ENCODE measurements at regions of chr10 and their contacts with region 1.

Region 1: GRCh38 chr10:100508691-100509150 is 10.9 kb downstream of the SEC31B start:
- DNase-seq: peak in 1 of 2 experiments; percentile 68
- H3K4me3 ChIP-seq: no peak overlapping the region
- H3K4me3 Mint-ChIP-seq: no peak overlapping the region
- H3K27ac Mint-ChIP-seq: no peak overlapping the region
- H3K4me1 ChIP-seq: peaks cover 20% of the 10 kb centered on the region
- H3K4me1 Mint-ChIP-seq: peaks cover 12% of the 10 kb centered on the region
- H3K27me3 ChIP-seq: no peaks in the 10 kb centered on the region
- H3K27me3 Mint-ChIP-seq: no peaks in the 10 kb centered on the region
- CTCF ChIP-seq: peak; percentile 55 to 61

Region 2: GRCh38 chr10:100229819-100230422 is 278.8 kb before region 1 on chr10:
- CTCF ChIA-PET with region 1: no interaction called
- POLR2A ChIA-PET with region 1: no interaction called
- intact Hi-C with region 1: loop called (anchors 5 kb)
- DNase-seq: no peak
- H3K4me3 ChIP-seq: peak overlapping the region; percentile 57
- H3K4me3 Mint-ChIP-seq: peak overlapping the region; percentile 93
- H3K27ac Mint-ChIP-seq: peak overlapping the region; percentile 83
- H3K4me1 ChIP-seq: no peaks in the 10 kb centered on the region
- H3K4me1 Mint-ChIP-seq: peaks cover 22% of the 10 kb centered on the region
- H3K27me3 ChIP-seq: no peaks in the 10 kb centered on the region
- H3K27me3 Mint-ChIP-seq: no peaks in the 10 kb centered on the region
- CTCF ChIP-seq: no peak

Region 3: GRCh38 chr10:100338434-100339036 is 170.2 kb before region 1 on chr10:
- CTCF ChIA-PET with region 1: interaction called, 6 read pairs
- POLR2A ChIA-PET with region 1: no interaction called
- intact Hi-C with region 1: loop called (anchors 1 kb)
- DNase-seq: peak; percentile 67 to 83
- H3K4me3 ChIP-seq: no peak overlapping the region
- H3K4me3 Mint-ChIP-seq: no peak overlapping the region
- H3K27ac Mint-ChIP-seq: no peak overlapping the region
- H3K4me1 ChIP-seq: peaks cover 4% of the 10 kb centered on the region
- H3K4me1 Mint-ChIP-seq: peaks cover 22% of the 10 kb centered on the region
- H3K27me3 ChIP-seq: no peaks in the 10 kb centered on the region
- H3K27me3 Mint-ChIP-seq: peaks cover 2% of the 10 kb centered on the region
- CTCF ChIP-seq: peak; percentile 95 to 96

Region 4: DNA sequence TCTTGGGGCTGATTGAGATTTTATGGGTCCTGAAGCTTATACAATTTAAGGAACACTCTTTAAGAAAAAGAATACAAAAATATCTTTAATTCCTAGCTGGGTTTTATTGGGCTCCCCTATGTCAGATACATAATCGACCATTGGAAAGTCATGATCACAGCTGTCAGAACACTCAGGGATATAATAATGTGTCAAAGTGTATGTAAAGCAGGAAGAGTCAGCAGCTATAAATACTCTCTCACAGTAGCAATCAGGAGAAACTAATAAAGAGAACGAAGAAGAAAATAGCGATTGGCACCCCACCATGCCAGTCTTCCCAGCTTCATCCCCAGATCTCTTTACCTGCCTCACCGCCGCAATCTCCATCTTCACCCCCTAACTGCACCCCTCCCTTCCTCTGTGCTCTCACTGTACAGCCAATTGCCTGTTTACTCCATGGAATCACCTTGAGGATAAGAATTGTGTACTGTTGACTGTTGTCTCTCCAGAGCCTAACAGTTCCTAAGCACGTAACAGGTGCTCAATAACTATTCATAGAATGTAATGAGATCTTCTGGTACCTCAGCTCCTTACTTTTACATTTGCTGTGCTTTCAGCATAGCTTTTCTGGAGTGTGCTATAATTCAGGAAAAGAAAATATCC is 69.9 kb before region 1 on chr10:
- CTCF ChIA-PET with region 1: interaction called, 13 read pairs
- POLR2A ChIA-PET with region 1: no interaction called
- intact Hi-C with region 1: loop called (anchors 1 kb)
- DNase-seq: no peak
- H3K4me3 ChIP-seq: no peak overlapping the region
- H3K4me3 Mint-ChIP-seq: no peak overlapping the region
- H3K27ac Mint-ChIP-seq: no peak overlapping the region
- H3K4me1 ChIP-seq: no peaks in the 10 kb centered on the region
- H3K4me1 Mint-ChIP-seq: peaks cover 13% of the 10 kb centered on the region
- H3K27me3 ChIP-seq: no peaks in the 10 kb centered on the region
- H3K27me3 Mint-ChIP-seq: no peaks in the 10 kb centered on the region
- CTCF ChIP-seq: no peak

Region 5: GRCh38 chr10:100481462-100482081 is 27.1 kb before region 1 on chr10:
- CTCF ChIA-PET with region 1: interaction called, 38 read pairs
- POLR2A ChIA-PET with region 1: no interaction called
- intact Hi-C with region 1: loop called (anchors 1 kb)
- DNase-seq: peak; percentile 83 to 88
- H3K4me3 ChIP-seq: peak overlapping the region; percentile 44
- H3K4me3 Mint-ChIP-seq: peak overlapping the region; percentile 74
- H3K27ac Mint-ChIP-seq: no peak overlapping the region
- H3K4me1 ChIP-seq: no peaks in the 10 kb centered on the region
- H3K4me1 Mint-ChIP-seq: peaks cover 13% of the 10 kb centered on the region
- H3K27me3 ChIP-seq: no peaks in the 10 kb centered on the region; the same call in 1 of the 2 replicates
- H3K27me3 Mint-ChIP-seq: peaks cover 18% of the 10 kb centered on the region
- CTCF ChIP-seq: no peak

Measured in Caco-2 (cell line).